ENCODE measurements at regions of chr11 and their contacts with region 1.

Region 1: GRCh38 chr11:67239783-67240575 is 26.3 kb upstream of the GRK2 start:
- DNase-seq: peak in 1 of 2 donors; percentile 98
- H3K4me3 ChIP-seq: peak overlapping the region; percentile 68 to 73
- H3K27ac ChIP-seq: peak overlapping the region; percentile 84
- H3K4me1 ChIP-seq: peaks cover 50% of the 10 kb centered on the region
- H3K27me3 ChIP-seq: no peaks in the 10 kb centered on the region
- CTCF ChIP-seq: peak in 1 of 3 experiments; percentile 12
- POLR2A ChIP-seq: peak in 1 of 2 donors; percentile 94

Region 2: DNA sequence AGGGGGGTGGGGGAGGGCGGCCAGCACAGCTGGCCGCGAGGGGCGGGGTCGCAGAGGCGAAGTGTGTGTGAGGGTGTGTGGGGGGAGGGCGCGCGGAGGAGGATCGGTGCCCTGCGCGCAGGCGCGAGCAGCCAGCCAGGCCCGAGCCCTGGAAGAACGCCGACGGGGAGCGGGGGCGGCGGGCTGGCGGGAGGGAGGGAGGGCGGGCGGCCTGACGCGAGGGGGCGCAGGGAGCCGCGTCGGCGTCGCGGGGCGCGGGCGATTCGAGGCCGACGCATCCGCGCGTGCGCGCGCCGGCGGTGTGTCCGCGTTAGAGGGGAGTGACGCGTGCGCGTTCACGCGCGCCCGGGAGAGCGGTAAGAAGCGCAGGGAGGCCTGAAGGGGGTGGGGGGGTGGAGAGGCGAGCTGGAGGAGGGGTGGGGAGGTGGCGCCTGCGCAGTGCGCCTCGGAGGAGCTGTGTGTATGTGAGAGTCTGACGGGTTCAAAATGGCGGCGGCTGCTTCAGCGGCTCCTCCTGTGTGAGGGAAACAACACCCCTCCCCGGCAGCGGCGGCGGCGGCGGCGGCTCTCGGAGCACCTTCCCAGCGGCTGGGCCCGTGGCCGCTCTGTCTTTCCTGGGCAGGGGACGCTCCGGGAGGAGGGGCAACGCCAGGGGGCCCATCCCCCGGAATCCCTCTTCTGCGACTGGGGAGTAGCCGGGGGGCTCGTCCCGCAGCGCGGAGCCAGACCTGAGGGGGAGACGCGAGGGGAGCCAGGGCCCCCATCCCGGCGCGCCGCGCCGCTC is 121.0 kb before region 1 on chr11 and contains the start of gene KDM2A:
- intact Hi-C with region 1: loop called (anchors 2 kb)
- DNase-seq: peak; percentile 99
- H3K4me3 ChIP-seq: peak within 1 kb of the TSS; percentile 86 to 99
- H3K27ac ChIP-seq: peak within 1 kb of the TSS; percentile 96
- H3K4me1 ChIP-seq: peaks cover 30% of the 10 kb centered on the region
- H3K27me3 ChIP-seq: no peaks in the 10 kb centered on the region
- CTCF ChIP-seq: peak in 1 of 3 experiments; percentile 42
- POLR2A ChIP-seq: peak in 1 of 2 donors; percentile 55
- total RNA-seq, gene KDM2A: 51.8 TPM

Measured in vagina (tissue), 2 donors.